ENCODE measurements at regions of chr1 and their contacts with region 1.

Region 1: DNA sequence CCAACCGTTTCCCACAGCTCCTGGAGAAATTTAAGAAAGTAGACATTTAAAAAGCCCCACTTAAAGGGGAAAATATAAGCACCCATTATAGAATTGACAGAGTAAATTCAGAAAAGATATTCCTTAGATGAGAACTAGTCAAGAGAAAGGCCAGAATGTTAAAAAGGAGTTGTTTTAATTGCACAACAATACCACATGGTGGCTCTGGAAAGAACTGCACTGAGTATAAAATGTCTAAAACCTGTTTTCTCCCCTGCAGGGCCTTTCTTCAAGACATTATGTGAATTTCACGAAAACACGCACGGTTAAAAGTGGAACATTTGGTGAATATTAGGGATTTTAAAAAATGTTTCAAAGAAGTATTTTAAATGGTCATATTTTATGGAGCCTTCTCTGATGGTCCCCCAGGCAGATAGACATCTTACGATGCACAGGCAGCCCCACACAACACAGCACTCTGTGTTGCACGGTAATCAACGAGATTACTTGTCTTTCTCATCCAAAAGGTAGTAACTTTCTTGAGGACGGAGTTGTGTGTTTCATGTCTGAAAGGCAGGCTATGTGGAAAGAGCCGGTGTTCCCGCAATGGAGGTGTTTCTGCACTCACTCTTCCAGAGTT is 101.9 kb downstream of the PRRX1 start:
- DNase-seq: peak; percentile 24
- H3K4me3 ChIP-seq: no peak overlapping the region
- H3K27ac ChIP-seq: no peak overlapping the region
- H3K27me3 ChIP-seq: no peaks in the 10 kb centered on the region
- CTCF ChIP-seq: peak; percentile 52

Region 2: GRCh38 chr1:169928438-169929209 is 837.2 kb before region 1 on chr1:
- in situ Hi-C with region 1: loop called (anchors 25 kb)
- DNase-seq: no peak
- H3K4me3 ChIP-seq: no peak overlapping the region
- H3K27ac ChIP-seq: no peak overlapping the region
- H3K27me3 ChIP-seq: no peaks in the 10 kb centered on the region
- CTCF ChIP-seq: peak; percentile 49